ENCODE measurements at regions of chr2 and their contacts with region 1.

Region 1: GRCh38 chr2:9003616-9004337 is at the start of gene MBOAT2:
- DNase-seq: peak; percentile 77 to 80 (median 79)
- H3K4me3 ChIP-seq: peak within 1 kb of the TSS; percentile 57 to 81 (median 76)
- H3K4me3 Mint-ChIP-seq: peak within 1 kb of the TSS; percentile 92 to 98
- H3K27ac ChIP-seq: peak within 1 kb of the TSS; percentile 31 to 73
- H3K27ac Mint-ChIP-seq: peak within 1 kb of the TSS in 6 of 7 donors; percentile 35 to 73 (median 69)
- H3K4me1 ChIP-seq: peaks cover 20 to 33% of the 10 kb centered on the region in 2 donors
- H3K4me1 Mint-ChIP-seq: peaks cover 29% of the 10 kb centered on the region
- H3K27me3 ChIP-seq: no peaks in the 10 kb centered on the region
- H3K27me3 Mint-ChIP-seq: peaks cover 0 to 2% (median 2%) of the 10 kb centered on the region in 3 donors
- CTCF ChIP-seq: no peak
- polyA plus RNA-seq, gene MBOAT2: 5.1 to 9.0 (median 5.5) TPM

Region 2: GRCh38 chr2:8836971-8837794 is 166.6 kb before region 1 on chr2 and contains the start of gene KIDINS220:
- intact Hi-C with region 1: loop called in 1 of 2 experiments (anchors 10 kb)
- DNase-seq: peak; percentile 74 to 85 (median 84)
- H3K4me3 ChIP-seq: peak within 1 kb of the TSS; percentile 82 to 87 (median 83)
- H3K4me3 Mint-ChIP-seq: peak within 1 kb of the TSS; percentile 98 to 100
- H3K27ac ChIP-seq: peak within 1 kb of the TSS; percentile 64 to 85
- H3K27ac Mint-ChIP-seq: peak within 1 kb of the TSS; percentile 96 to 99 (median 98)
- H3K4me1 ChIP-seq: peaks cover 35 to 50% of the 10 kb centered on the region in 2 donors
- H3K4me1 Mint-ChIP-seq: peaks cover 51% of the 10 kb centered on the region
- H3K27me3 ChIP-seq: no peaks in the 10 kb centered on the region
- H3K27me3 Mint-ChIP-seq: peaks cover 0 to 7% (median 0%) of the 10 kb centered on the region in 3 donors
- CTCF ChIP-seq: no peak
- polyA plus RNA-seq, gene KIDINS220: 12.1 to 26.7 (median 26.3) TPM